ENCODE measurements at regions of chr16 and their contacts with region 1.

Region 1: GRCh38 chr16:86072328-86073102 is 173.6 kb downstream of the IRF8 start:
- DNase-seq: no peak
- H3K4me3 ChIP-seq: no peak overlapping the region
- H3K27ac ChIP-seq: no peak overlapping the region
- H3K4me1 ChIP-seq: no peaks in the 10 kb centered on the region
- H3K27me3 ChIP-seq: no peaks in the 10 kb centered on the region
- CTCF ChIP-seq: peak; percentile 70 to 78 (median 71)

Region 2: DNA sequence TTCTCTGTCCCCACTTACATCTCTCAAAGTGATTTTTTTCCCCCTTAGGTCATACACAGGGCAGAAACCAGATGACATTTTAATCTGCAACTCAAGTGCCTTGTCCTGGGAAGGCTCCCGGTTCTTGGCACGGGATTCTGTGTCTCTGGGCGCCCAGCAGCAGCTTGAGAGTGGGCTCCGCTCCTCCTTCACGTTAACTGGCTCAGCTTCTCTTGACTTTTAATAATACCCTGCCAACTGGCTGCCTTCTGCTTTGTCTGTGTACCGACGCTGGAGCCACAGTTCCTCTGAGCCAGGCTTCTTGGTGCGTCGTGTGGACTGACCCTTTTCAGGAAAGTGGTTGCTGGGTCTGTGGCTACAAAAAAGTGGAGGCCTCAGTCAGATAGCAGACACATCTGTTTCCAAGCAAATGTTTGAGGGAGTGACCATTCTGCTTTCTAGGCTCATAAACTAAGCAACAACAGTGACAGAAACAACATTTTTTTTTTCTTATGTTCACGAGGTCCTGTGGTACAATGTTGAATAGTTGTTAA is 108.7 kb before region 1 on chr16:
- dilution Hi-C with region 1: no loop called
- DNase-seq: no peak
- H3K4me3 ChIP-seq: no peak overlapping the region
- H3K27ac ChIP-seq: no peak overlapping the region
- H3K4me1 ChIP-seq: no peaks in the 10 kb centered on the region
- H3K27me3 ChIP-seq: peaks cover 6% of the 10 kb centered on the region
- CTCF ChIP-seq: no peak

Region 3: GRCh38 chr16:86158688-86159360 is 86.3 kb after region 1 on chr16:
- dilution Hi-C with region 1: no loop called
- DNase-seq: no peak
- H3K4me3 ChIP-seq: no peak overlapping the region
- H3K27ac ChIP-seq: no peak overlapping the region
- H3K4me1 ChIP-seq: no peaks in the 10 kb centered on the region
- H3K27me3 ChIP-seq: no peaks in the 10 kb centered on the region
- CTCF ChIP-seq: no peak

Region 4: DNA sequence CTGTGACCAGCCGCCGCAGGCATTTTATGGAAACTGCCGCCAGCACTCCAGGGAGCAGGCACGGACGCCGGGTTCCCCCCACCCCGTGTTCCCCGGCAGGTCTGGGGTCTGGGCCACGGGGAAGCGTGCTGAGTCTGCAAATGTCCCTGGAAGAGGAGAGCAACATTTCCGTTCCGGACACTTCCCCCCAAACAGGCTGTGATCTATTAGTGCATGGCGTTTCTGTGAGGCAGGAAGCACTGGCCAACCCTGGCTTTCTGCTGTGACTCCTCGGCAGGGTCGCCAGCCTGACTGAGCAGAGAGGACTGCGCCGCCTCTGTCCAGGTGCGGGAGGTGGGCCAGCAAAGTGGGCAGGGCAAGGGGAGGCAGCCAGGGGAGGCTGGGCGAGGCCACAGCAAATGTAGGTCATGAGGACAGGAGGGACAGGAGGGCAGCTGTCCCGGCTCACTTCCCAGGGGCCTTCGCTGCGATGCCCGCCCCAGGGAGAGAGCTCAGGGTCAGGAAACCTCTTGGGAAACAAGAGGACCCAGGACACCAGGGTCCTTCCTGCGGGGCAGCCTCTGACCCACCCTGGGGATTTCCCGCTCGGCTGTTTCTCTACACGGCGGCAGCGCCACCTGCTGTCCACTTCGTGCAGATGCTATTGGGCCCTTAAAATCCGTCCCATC is 447.3 kb after region 1 on chr16:
- dilution Hi-C with region 1: loop called (anchors 10 kb)
- DNase-seq: no peak
- H3K4me3 ChIP-seq: no peak overlapping the region
- H3K27ac ChIP-seq: no peak overlapping the region
- H3K4me1 ChIP-seq: no peaks in the 10 kb centered on the region
- H3K27me3 ChIP-seq: peaks cover 61% of the 10 kb centered on the region
- CTCF ChIP-seq: peak; percentile 85 to 91 (median 86)